Heart left ventricle (tissue), 16 donors: ENCODE measurements at regions of chr12 and their contacts with region 1.

Region 1: DNA sequence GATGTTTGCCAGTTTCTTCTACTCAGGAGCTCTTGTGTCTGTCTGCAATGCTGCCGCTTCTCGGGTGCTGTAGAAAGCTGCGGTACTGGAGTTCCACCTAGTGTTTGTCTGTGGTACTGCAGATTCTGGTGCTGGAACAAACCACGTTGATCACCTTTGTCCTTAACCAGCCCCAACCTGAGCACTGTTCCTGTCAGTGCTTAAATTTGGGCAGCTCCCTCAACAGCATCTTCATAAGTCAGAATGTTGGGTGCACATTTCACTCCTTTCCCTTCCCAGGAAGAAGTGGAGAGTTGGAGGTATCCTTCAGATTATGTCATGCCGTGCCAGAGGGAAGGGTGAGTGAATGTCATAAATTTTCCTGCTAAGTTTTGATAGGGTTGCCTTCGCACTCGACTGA is 48.7 kb upstream of the LALBA start:
- DNase-seq: peak in 4 of 5 donors; percentile 51 to 63 (median 56)
- ATAC-seq: peak; percentile 55 to 80 (median 66)
- H3K4me3 ChIP-seq: no peak overlapping the region
- H3K27ac ChIP-seq: no peak overlapping the region
- H3K4me1 ChIP-seq: no peaks in the 10 kb centered on the region
- H3K27me3 ChIP-seq: peaks cover 0 to 32% (median 0%) of the 10 kb centered on the region in 9 donors
- CTCF ChIP-seq: peak; percentile 91 to 99 (median 94)
- POLR2A ChIP-seq: no peak

Region 2: GRCh38 chr12:48183091-48183875 is 435.3 kb before region 1 on chr12 and contains the start of gene CCDC184:
- intact Hi-C with region 1: loop called in 3 of 10 experiments (anchors 5 to 10 kb)
- DNase-seq: peak; percentile 62 to 79 (median 76)
- ATAC-seq: peak; percentile 54 to 82 (median 80)
- H3K4me3 ChIP-seq: peak within 1 kb of the TSS; percentile 49 to 89 (median 70)
- H3K27ac ChIP-seq: peak within 1 kb of the TSS in 9 of 12 donors; percentile 1 to 72 (median 54)
- H3K4me1 ChIP-seq: peaks cover 0 to 28% (median 16%) of the 10 kb centered on the region in 12 donors
- H3K27me3 ChIP-seq: peaks cover 17 to 54% (median 31%) of the 10 kb centered on the region in 9 donors
- CTCF ChIP-seq: peak in 8 of 12 donors; percentile 7 to 65 (median 36)
- POLR2A ChIP-seq: peak in 1 of 2 donors; percentile 27
- total RNA-seq, gene CCDC184: 0.25 to 1.5 (median 0.54) TPM

Region 3: DNA sequence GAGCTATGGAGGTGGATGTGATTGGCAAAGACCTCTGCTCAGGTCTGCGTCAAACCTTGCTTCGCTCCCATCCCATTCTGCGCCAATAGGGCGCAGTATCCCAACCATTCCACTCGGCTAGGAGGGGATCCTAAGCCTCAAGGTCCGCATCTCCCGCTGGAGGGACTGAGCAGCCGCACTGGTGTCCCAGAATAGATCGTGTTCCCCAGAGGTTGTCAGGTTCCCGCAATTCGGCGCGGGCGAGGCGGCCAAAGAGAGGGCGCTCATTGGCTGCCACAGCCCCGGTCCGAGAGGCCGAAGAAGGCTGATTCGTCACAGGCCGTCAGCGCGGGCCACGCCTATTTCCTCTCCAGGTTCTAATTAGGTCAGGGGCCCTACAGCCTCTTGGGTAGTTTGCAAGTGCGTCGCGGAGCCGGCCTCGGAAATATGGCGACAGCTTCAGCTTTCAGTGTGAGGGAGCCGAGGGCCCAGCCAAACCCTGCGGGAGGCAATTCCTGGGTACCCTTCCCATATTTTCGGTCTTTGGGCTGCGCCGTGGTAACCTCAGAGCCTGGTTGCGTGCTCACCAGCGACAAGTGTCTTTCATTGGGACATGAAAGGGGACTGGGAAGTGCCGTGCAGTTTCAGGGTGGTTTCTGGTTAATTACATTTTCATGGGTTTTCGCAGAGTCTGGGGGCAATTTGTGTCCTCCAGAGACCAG is 420.4 kb before region 1 on chr12:
- intact Hi-C with region 1: loop called in 1 of 10 experiments (anchors 10 kb)
- DNase-seq: peak; percentile 98 to 99 (median 99)
- ATAC-seq: peak; percentile 98 to 100 (median 99)
- H3K4me3 ChIP-seq: peak overlapping the region; percentile 60 to 92 (median 78)
- H3K27ac ChIP-seq: peak overlapping the region; percentile 89 to 100 (median 98)
- H3K4me1 ChIP-seq: peaks cover 0 to 38% (median 16%) of the 10 kb centered on the region in 12 donors
- H3K27me3 ChIP-seq: no peaks in the 10 kb centered on the region
- CTCF ChIP-seq: no peak
- POLR2A ChIP-seq: peak; percentile 61 to 99

Region 4: GRCh38 chr12:48263617-48264016 is 354.9 kb before region 1 on chr12:
- intact Hi-C with region 1: loop called in 2 of 10 experiments (anchors 10 kb)
- DNase-seq: no peak
- ATAC-seq: no peak
- H3K4me3 ChIP-seq: no peak overlapping the region
- H3K27ac ChIP-seq: no peak overlapping the region
- H3K4me1 ChIP-seq: no peaks in the 10 kb centered on the region
- H3K27me3 ChIP-seq: no peaks in the 10 kb centered on the region
- CTCF ChIP-seq: no peak
- POLR2A ChIP-seq: no peak

Region 5: GRCh38 chr12:48286665-48287064 is 331.9 kb before region 1 on chr12:
- intact Hi-C with region 1: no loop called
- DNase-seq: no peak
- ATAC-seq: no peak
- H3K4me3 ChIP-seq: no peak overlapping the region
- H3K27ac ChIP-seq: no peak overlapping the region
- H3K4me1 ChIP-seq: peaks cover 0 to 10% (median 0%) of the 10 kb centered on the region in 12 donors
- H3K27me3 ChIP-seq: peaks cover 0 to 4% (median 0%) of the 10 kb centered on the region in 9 donors
- CTCF ChIP-seq: peak in 11 of 12 donors; percentile 14 to 56 (median 39)
- POLR2A ChIP-seq: no peak

Region 6: GRCh38 chr12:48542300-48542928 is 76.1 kb before region 1 on chr12:
- intact Hi-C with region 1: loop called in 3 of 10 experiments (anchors 2 to 5 kb)
- DNase-seq: no peak
- ATAC-seq: no peak
- H3K4me3 ChIP-seq: no peak overlapping the region
- H3K27ac ChIP-seq: no peak overlapping the region
- H3K4me1 ChIP-seq: no peaks in the 10 kb centered on the region
- H3K27me3 ChIP-seq: peaks cover 0 to 16% (median 0%) of the 10 kb centered on the region in 9 donors
- CTCF ChIP-seq: peak in 11 of 12 donors; percentile 11 to 52 (median 43)
- POLR2A ChIP-seq: no peak